AG04450 (cell line): ENCODE measurements at regions of chr7 and their contacts with region 1.

Region 1: GRCh38 chr7:121994625-121995410 is 121.9 kb downstream of the PTPRZ1 start:
- DNase-seq: peak; percentile 55
- H3K4me3 ChIP-seq: no peak overlapping the region
- H3K27ac ChIP-seq: no peak overlapping the region
- H3K27me3 ChIP-seq: no peaks in the 10 kb centered on the region
- CTCF ChIP-seq: peak; percentile 79

Region 2: DNA sequence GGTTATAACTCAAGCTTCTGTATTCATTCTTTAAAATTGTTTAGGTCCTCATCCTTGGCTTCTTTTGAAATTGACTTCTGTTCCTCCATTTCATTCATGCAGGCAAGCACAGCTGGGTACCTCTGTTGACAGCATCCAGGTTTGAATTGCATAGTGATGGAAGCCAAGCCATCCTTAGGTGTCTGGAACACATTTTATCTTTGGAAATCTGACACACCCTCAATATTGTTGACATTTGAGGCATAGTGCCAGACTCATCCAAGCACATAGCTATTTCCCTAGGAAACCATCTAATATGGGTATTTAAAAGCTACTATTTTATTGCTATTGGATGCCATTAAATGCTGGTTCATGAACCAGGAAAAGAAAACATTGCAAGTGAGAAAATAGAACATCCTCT is 263.9 kb before region 1 on chr7:
- CTCF ChIA-PET with region 1: interaction called, 21 read pairs
- POLR2A ChIA-PET with region 1: no interaction called
- DNase-seq: no peak
- H3K4me3 ChIP-seq: no peak overlapping the region
- H3K27ac ChIP-seq: no peak overlapping the region
- H3K27me3 ChIP-seq: no peaks in the 10 kb centered on the region
- CTCF ChIP-seq: no peak

Region 3: GRCh38 chr7:121810831-121811672 is 183.8 kb before region 1 on chr7:
- CTCF ChIA-PET with region 1: interaction called, 11 read pairs
- POLR2A ChIA-PET with region 1: no interaction called
- DNase-seq: no peak
- H3K4me3 ChIP-seq: no peak overlapping the region
- H3K27ac ChIP-seq: no peak overlapping the region
- H3K27me3 ChIP-seq: no peaks in the 10 kb centered on the region
- CTCF ChIP-seq: no peak

Region 4: GRCh38 chr7:121882731-121883130 is 112.1 kb before region 1 on chr7:
- CTCF ChIA-PET with region 1: no interaction called
- POLR2A ChIA-PET with region 1: no interaction called
- DNase-seq: no peak
- H3K4me3 ChIP-seq: no peak overlapping the region
- H3K27ac ChIP-seq: no peak overlapping the region
- H3K27me3 ChIP-seq: no peaks in the 10 kb centered on the region
- CTCF ChIP-seq: no peak

Region 5: DNA sequence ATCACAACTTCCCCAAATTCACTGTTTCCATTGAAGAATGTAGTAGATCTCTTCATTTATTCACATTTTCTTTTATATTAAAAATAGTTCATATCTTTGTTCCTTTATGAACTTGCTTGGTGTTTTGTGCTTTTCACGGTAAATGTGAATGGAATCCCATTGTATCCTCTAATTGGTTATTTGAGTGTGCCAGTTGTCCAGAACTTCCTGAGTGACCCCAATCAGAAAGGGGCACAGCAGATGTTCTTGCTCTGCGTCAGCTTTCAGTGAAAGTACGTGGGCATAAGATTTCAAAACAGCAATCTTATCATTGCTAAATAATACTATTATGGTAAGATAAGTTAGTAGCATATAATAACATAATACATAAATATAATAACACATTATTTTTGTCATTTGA is 74.8 kb before region 1 on chr7:
- CTCF ChIA-PET with region 1: interaction called, 13 read pairs
- POLR2A ChIA-PET with region 1: no interaction called
- DNase-seq: no peak
- H3K4me3 ChIP-seq: no peak overlapping the region
- H3K27ac ChIP-seq: no peak overlapping the region
- H3K27me3 ChIP-seq: no peaks in the 10 kb centered on the region
- CTCF ChIP-seq: no peak

Region 6: DNA sequence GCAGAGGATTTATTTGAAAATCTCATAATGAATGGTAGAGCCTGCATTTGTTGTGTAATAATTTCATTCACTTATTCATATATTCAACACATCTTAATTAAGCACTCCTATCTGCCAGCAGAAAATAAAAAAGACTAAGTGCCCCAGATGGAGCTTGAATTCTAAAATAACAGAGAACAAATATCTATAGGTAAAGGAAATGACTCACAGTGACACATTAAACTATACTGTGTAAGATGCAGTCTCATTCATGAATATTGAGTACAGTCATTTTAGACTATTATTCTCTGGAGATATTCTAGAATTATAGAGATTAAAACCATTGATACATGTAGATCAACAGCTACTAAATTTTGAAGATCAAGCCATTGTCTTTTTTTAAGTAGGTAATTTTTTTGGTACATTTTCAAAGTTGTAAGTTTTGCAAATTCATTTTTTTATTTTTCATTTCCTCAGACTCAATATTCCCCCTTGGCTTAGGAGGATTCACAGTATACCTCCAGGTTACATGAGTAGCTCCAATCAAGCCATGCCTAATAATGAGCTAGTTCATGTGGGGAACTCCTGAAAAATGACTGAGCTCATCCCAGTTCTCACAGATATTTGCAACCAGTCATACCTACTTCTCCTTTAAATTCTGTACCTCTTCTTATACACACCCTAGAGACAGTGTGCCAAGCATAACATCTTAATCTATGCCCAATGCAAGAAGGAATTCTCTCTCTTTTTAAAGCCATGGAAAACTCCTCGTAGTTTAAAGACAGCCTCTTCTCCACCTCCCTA is 49.6 kb before region 1 on chr7:
- CTCF ChIA-PET with region 1: interaction called, 15 read pairs
- POLR2A ChIA-PET with region 1: no interaction called
- DNase-seq: no peak
- H3K4me3 ChIP-seq: no peak overlapping the region
- H3K27ac ChIP-seq: no peak overlapping the region
- H3K27me3 ChIP-seq: no peaks in the 10 kb centered on the region
- CTCF ChIP-seq: no peak

Region 7: DNA sequence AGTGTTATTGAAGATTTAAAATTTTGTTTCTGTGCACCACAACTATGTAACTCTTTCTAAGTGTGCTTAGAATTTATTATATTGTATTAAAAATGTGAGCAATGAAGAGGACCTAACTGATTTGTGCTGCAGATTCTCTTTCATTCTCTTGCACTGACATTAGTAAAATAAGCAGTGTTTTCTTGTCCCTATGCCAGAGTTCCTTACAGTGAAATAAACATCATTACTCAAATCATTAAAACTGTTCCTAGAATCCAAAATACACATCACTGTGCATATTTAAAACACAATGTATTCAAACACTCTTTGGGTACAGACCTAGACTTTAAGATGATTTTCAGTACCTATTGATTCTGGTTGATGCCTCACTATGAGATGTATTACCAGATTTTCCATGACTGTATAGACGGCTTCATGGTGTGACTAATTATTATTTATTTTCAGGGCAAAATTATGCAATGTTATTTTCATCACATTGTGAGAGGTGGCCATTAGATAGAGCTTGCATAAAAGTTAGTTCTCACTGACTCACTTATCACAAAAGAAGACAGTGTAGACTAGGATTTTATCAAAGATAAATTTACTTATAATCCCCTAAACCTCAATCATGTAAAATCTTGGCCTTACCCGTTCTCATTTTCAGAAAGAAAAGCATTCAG is 28.4 kb before region 1 on chr7:
- CTCF ChIA-PET with region 1: interaction called, 24 read pairs
- POLR2A ChIA-PET with region 1: no interaction called
- DNase-seq: no peak
- H3K4me3 ChIP-seq: no peak overlapping the region
- H3K27ac ChIP-seq: no peak overlapping the region
- H3K27me3 ChIP-seq: no peaks in the 10 kb centered on the region
- CTCF ChIP-seq: no peak